ENCODE measurements at regions of chr9 and their contacts with region 1.

Region 1: DNA sequence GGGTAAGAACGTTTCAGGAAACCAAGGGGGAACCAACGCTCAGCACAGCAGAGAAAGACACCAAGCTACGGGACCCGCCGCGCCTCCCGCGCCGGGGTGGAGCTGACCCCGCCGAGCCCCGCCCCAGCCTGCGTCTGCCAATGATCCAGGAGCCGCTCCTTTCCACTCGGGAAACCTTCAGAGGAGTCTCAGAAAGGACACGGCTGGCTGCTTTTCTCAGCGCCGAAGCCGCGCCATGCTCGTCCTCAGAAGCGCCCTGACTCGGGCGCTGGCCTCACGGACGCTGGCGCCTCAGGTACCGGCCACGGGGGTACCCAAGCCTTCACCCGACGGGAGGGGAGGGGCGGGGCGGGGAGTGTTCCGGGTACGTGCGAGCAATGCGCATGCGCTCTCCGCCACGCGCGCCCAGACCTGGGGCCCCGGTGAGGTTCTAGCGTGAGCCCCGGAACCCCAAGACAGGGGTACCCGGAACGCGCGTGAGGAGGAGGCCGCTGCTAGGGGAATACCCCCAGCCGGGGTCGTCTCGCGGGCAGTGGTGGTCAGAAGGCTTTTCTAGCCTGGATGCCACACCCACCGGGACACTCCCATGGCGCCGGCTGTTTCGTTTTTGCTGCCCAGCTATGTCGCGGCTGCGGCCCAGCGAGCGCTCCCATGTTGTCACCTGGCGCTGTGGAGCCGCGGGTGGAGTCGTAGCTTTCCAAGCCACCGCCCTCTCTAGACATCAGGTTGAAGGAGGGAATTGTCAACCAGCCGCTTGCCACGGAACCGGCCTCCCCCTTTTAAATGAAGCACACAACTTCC is at the start of gene NIPSNAP3A:
- DNase-seq: peak; percentile 75 to 79
- ATAC-seq: peak; percentile 89 to 91
- H3K4me3 ChIP-seq: peak within 1 kb of the TSS; percentile 70 to 84 (median 78)
- H3K27ac ChIP-seq: peak within 1 kb of the TSS; percentile 84 to 95 (median 90)
- H3K4me1 ChIP-seq: peaks cover 8 to 10% of the 10 kb centered on the region in 2 donors
- H3K27me3 ChIP-seq: no peaks in the 10 kb centered on the region
- CTCF ChIP-seq: no peak
- POLR2A ChIP-seq: peak; percentile 57 to 76
- total RNA-seq, gene NIPSNAP3A: 5.9 to 17.2 (median 6.9) TPM

Region 2: GRCh38 chr9:104093647-104094533 is 653.9 kb before region 1 on chr9 and contains the start of gene SMC2:
- in situ Hi-C with region 1: no loop called
- intact Hi-C with region 1: loop called (anchors 5 kb)
- DNase-seq: peak; percentile 79 to 85
- ATAC-seq: peak; percentile 95 to 96
- H3K4me3 ChIP-seq: peak within 1 kb of the TSS; percentile 80 to 87 (median 84)
- H3K27ac ChIP-seq: peak within 1 kb of the TSS; percentile 87 to 98 (median 92)
- H3K4me1 ChIP-seq: peaks cover 28% of the 10 kb centered on the region in 2 donors
- H3K27me3 ChIP-seq: no peaks in the 10 kb centered on the region
- CTCF ChIP-seq: no peak
- POLR2A ChIP-seq: peak; percentile 48 to 67
- total RNA-seq, gene SMC2: 2.5 to 6.2 (median 4.6) TPM

Region 3: DNA sequence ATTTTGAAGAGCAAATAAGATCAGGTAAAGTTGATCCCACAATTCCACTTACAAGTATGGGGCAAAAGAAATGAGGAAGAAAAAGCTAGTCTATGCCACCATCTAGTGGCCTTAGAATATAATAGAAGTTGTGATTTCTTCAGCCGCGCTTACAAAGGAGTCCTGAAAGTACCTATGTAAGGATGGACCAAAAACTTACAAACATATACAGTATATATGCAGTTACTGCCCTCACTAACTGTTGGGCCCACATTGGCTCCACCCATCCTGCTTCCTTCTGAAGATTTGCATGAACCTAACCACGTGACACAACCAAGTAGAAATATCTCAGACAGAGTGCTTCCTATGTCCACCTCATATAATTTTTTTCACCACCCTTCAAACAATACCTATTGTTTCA is 65.1 kb before region 1 on chr9:
- in situ Hi-C with region 1: no loop called
- intact Hi-C with region 1: no loop called
- DNase-seq: no peak
- ATAC-seq: no peak
- H3K4me3 ChIP-seq: no peak overlapping the region
- H3K27ac ChIP-seq: no peak overlapping the region
- H3K4me1 ChIP-seq: no peaks in the 10 kb centered on the region
- H3K27me3 ChIP-seq: no peaks in the 10 kb centered on the region
- CTCF ChIP-seq: peak in 1 of 5 experiments; percentile 8
- POLR2A ChIP-seq: no peak

Region 4: GRCh38 chr9:105244003-105244733 is 496.4 kb after region 1 on chr9 and contains the start of gene SLC44A1:
- in situ Hi-C with region 1: no loop called
- intact Hi-C with region 1: loop called (anchors 5 kb)
- DNase-seq: peak; percentile 91 to 95
- ATAC-seq: peak; percentile 89 to 90
- H3K4me3 ChIP-seq: peak within 1 kb of the TSS; percentile 76 to 96 (median 84)
- H3K27ac ChIP-seq: peak within 1 kb of the TSS; percentile 71 to 82 (median 74)
- H3K4me1 ChIP-seq: peaks cover 10 to 16% of the 10 kb centered on the region in 2 donors
- H3K27me3 ChIP-seq: no peaks in the 10 kb centered on the region
- CTCF ChIP-seq: peak in 1 of 5 experiments; percentile 9
- POLR2A ChIP-seq: peak; percentile 85 to 88
- total RNA-seq, gene SLC44A1: 5.4 to 15.9 (median 11.3) TPM

Measured in gastrocnemius medialis (tissue), 4 donors.